Dorsolateral prefrontal cortex (tissue), 120 donors: ENCODE measurements at regions of chr16 and their contacts with region 1.

Region 1: DNA sequence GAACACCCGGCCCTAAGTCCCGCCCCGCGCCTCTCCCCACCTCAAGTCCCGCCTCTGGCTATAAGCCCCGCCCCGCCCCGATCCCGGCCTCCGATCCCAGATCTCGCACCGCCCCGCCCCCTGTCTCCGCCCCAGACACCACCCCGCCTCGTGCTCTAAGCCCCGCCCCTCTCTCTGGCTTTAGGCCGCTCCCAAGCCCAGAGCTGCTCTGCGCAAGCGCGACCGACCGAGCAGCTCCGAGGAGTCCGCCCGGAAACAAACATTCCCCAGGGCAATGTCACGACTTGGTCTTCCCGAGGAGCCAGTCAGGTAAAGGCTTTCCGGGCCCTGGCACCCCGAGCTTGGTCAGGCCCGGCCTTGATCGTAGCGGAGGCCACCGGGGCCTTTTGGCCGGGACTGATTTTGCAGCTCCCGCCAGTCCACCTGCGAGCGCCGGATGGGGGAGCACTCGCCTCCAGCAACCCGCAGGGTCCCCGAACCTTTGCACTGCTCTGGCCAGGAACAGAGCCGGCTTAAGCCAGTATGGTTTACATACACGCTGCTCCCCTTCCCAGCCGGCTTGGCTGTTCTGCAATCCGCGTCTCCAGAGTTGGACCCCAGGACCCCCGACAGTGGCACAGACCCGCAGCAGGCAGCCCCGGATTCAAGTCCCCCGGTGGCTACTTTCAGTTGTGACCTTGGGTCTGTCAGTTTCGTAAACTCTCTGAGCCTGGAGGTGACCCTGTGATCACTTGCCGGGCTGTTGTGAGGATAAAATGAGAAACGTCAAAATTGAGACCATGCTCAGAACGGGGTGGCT is at the start of gene NUDT7:
- DNase-seq: peak; percentile 96 to 99 (median 97)
- H3K4me3 ChIP-seq: peak within 1 kb of the TSS; percentile 58 to 97 (median 84)
- H3K27ac ChIP-seq: peak within 1 kb of the TSS; percentile 20 to 91 (median 82)
- H3K27me3 ChIP-seq: no peaks in the 10 kb centered on the region
- CTCF ChIP-seq: peak in 53 of 56 donors; percentile 16 to 67 (median 44)
- total RNA-seq, gene NUDT7: 2.9 to 16.8 (median 8.6) TPM

Region 2: GRCh38 chr16:77190478-77191258 is 531.8 kb before region 1 on chr16 and contains the start of gene MON1B:
- intact Hi-C with region 1: loop called in 1 of 2 experiments (anchors 5 kb)
- DNase-seq: peak; percentile 93 to 99 (median 98)
- H3K4me3 ChIP-seq: peak within 1 kb of the TSS; percentile 68 to 100 (median 94)
- H3K27ac ChIP-seq: peak within 1 kb of the TSS; percentile 85 to 100 (median 98)
- H3K27me3 ChIP-seq: no peaks in the 10 kb centered on the region
- CTCF ChIP-seq: peak in 26 of 56 donors; percentile 5 to 54 (median 27)
- total RNA-seq, gene MON1B: 37.4 to 82.2 (median 54.8) TPM

Region 3: DNA sequence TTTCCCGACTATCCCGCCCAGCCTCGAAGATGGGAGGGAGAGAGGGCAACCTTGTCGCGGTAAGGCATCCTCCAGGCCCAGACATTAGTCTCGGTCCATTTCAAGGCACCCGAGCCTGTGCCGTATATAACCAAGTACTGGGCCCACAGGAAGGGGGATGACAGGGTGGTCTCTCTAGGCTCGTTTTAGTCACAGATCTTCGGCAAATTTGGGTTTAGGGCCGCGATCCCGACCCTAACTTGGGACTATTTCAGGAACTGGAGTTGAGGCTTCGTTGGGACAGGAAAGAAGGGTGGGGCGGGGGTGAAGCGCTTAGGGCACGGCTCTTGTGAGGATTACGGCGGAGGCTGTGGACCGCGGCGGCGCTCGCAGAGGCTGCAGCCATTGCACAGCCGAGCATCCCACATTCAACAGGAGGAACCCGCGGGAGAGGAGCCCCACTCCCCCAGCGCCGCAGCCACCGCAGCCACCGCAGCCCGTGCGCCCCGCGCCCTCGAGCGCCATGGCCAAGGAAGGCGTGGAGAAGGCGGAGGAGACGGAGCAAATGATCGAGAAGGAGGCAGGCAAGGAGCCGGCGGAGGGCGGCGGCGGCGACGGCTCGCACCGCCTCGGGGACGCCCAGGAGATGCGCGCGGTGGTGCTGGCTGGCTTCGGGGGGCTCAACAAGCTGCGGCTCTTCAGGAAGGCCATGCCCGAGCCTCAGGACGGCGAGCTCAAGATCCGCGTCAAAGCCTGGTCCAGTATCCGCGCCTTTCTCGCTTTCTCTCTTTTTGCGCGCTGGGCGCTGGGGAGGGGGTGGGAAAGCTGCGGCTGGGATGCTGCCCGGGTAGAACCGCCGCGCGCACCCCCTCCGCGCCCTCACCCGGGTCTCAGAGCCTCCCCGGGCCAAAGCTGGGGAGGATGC is 65.9 kb after region 1 on chr16 and contains the start of gene VAT1L:
- intact Hi-C with region 1: loop called in 1 of 2 experiments (anchors 2 kb)
- DNase-seq: peak; percentile 47 to 81 (median 74)
- H3K4me3 ChIP-seq: peak within 1 kb of the TSS; percentile 55 to 93 (median 76)
- H3K27ac ChIP-seq: peak within 1 kb of the TSS in 10 of 59 donors; percentile 6 to 78 (median 39)
- H3K27me3 ChIP-seq: peaks cover 0 to 44% (median 10%) of the 10 kb centered on the region in 45 donors
- CTCF ChIP-seq: no peak
- total RNA-seq, gene VAT1L: 8.5 to 63.7 (median 35.5) TPM